Activated B cell treated with CpG ODN at 0.5 μM for 24 hours (primary cell): ENCODE measurements at regions of chr4 and their contacts with region 1.

Region 1: GRCh38 chr4:3047464-3048286 is 26.7 kb downstream of the HTT-AS start:
- DNase-seq: peak; percentile 75
- ATAC-seq: peak; percentile 92
- H3K4me3 Mint-ChIP-seq: peak overlapping the region; percentile 47
- H3K27ac Mint-ChIP-seq: peak overlapping the region; percentile 95
- H3K4me1 Mint-ChIP-seq: peaks cover 52% of the 10 kb centered on the region
- H3K27me3 Mint-ChIP-seq: no peaks in the 10 kb centered on the region
- CTCF ChIP-seq: no peak

Region 2: GRCh38 chr4:2689825-2690700 is 357.6 kb before region 1 on chr4:
- CTCF ChIA-PET with region 1: no interaction called
- POLR2A ChIA-PET with region 1: no interaction called
- intact Hi-C with region 1: no loop called
- DNase-seq: peak; percentile 78
- ATAC-seq: peak; percentile 85
- H3K4me3 Mint-ChIP-seq: peak overlapping the region; percentile 75
- H3K27ac Mint-ChIP-seq: peak overlapping the region; percentile 95
- H3K4me1 Mint-ChIP-seq: peaks cover 70% of the 10 kb centered on the region
- H3K27me3 Mint-ChIP-seq: no peaks in the 10 kb centered on the region
- CTCF ChIP-seq: no peak

Region 3: GRCh38 chr4:2771264-2771663 is 276.4 kb before region 1 on chr4:
- CTCF ChIA-PET with region 1: no interaction called
- POLR2A ChIA-PET with region 1: no interaction called
- intact Hi-C with region 1: no loop called
- DNase-seq: no peak
- ATAC-seq: no peak
- H3K4me3 Mint-ChIP-seq: no peak overlapping the region
- H3K27ac Mint-ChIP-seq: peak overlapping the region; percentile 33
- H3K4me1 Mint-ChIP-seq: peaks cover 13% of the 10 kb centered on the region
- H3K27me3 Mint-ChIP-seq: no peaks in the 10 kb centered on the region
- CTCF ChIP-seq: no peak

Region 4: DNA sequence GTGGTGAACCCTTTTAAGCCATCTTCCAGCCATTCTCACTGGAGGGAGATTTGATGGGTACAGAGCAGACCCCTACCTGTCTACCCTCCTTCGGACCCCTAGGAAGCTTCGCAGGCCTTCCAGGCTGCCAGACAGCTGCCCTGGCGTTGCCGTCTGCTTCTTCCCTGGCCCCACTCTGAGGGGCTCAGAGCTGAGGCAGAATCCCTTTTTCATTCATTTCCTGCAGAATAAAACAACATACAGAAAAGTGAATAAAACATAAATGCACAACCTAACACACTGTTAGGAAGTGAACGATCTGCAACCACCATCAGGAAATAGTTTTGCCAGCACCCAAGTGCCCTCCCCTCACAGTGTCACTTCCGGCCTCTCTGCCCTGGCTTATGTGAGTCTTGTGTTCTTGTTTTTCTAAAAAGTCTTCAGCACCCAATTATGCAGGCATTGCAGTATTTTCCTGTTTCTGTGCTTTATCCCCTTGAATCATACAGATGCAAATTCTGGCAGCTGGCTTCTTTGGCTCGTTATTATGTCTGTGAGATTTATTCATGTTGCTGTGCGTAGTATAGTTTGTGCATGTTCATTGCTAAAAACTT is 209.7 kb before region 1 on chr4:
- CTCF ChIA-PET with region 1: no interaction called
- POLR2A ChIA-PET with region 1: no interaction called
- intact Hi-C with region 1: loop called (anchors 5 kb)
- DNase-seq: peak; percentile 32
- ATAC-seq: peak; percentile 54
- H3K4me3 Mint-ChIP-seq: peak overlapping the region; percentile 74
- H3K27ac Mint-ChIP-seq: peak overlapping the region; percentile 81
- H3K4me1 Mint-ChIP-seq: peaks cover 74% of the 10 kb centered on the region
- H3K27me3 Mint-ChIP-seq: no peaks in the 10 kb centered on the region
- CTCF ChIP-seq: no peak

Region 5: GRCh38 chr4:3106339-3107186 is 58.9 kb after region 1 on chr4:
- CTCF ChIA-PET with region 1: interaction called, 28 read pairs
- POLR2A ChIA-PET with region 1: interaction called, 4 read pairs
- intact Hi-C with region 1: loop called (anchors 1 kb)
- DNase-seq: peak; percentile 81
- ATAC-seq: peak; percentile 100
- H3K4me3 Mint-ChIP-seq: no peak overlapping the region
- H3K27ac Mint-ChIP-seq: peak overlapping the region; percentile 73
- H3K4me1 Mint-ChIP-seq: peaks cover 9% of the 10 kb centered on the region
- H3K27me3 Mint-ChIP-seq: no peaks in the 10 kb centered on the region
- CTCF ChIP-seq: no peak

Region 6: DNA sequence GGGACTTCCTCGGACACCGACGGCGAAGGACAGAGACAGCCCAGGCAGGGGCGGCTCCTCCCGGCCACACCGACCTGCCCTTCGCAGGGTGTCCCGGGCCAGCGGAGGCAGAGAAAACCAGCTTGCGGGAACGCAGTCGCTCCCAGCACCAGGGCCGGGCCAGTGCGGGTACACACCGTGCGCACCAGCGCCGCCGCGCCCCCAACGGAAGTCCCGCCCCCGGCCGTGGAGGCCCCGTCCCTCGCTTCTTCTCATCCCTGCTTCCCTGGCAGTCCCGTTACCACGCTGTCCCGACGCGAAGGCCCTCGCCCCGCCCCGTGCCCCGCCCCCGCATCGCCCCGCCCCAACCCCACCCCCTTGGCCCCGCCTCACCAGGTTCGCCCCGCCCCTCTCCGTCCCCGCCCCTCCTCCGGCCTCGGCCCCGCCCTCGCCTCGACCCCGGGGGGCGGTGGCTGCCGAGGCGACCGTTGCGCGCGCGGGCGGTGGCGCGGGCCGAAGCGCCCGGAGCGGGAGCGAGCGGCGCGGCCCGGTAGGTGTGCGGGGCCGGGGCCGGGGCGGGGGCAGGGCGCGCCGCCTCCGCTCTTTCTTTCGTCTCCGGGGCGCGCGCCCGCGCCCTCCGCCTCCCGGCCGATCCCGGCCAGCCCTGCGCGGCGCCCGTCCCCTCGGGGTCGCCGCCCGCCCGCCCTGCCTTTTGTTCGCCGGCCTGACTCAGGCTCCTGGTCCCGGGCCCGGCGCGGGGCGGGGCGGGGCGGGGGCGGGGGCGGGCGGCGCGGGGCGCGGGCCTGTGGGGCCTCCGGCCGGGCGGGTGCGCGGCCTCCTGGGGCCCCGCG is 245.1 kb after region 1 on chr4 and contains the start of gene RGS12:
- CTCF ChIA-PET with region 1: no interaction called
- POLR2A ChIA-PET with region 1: no interaction called
- intact Hi-C with region 1: loop called (anchors 10 kb)
- DNase-seq: peak; percentile 81
- ATAC-seq: peak; percentile 83
- H3K4me3 Mint-ChIP-seq: peak within 1 kb of the TSS; percentile 86
- H3K27ac Mint-ChIP-seq: peak within 1 kb of the TSS; percentile 51
- H3K4me1 Mint-ChIP-seq: peaks cover 14% of the 10 kb centered on the region
- H3K27me3 Mint-ChIP-seq: peaks cover 15% of the 10 kb centered on the region
- CTCF ChIP-seq: no peak
- total RNA-seq, gene RGS12: 8.5 and 10.6 TPM in 2 replicates

Region 7: GRCh38 chr4:3480528-3481112 is 432.9 kb after region 1 on chr4:
- CTCF ChIA-PET with region 1: no interaction called
- POLR2A ChIA-PET with region 1: no interaction called
- intact Hi-C with region 1: loop called (anchors 10 kb)
- DNase-seq: peak; percentile 81
- ATAC-seq: peak; percentile 47
- H3K4me3 Mint-ChIP-seq: no peak overlapping the region
- H3K27ac Mint-ChIP-seq: no peak overlapping the region
- H3K4me1 Mint-ChIP-seq: peaks cover 39% of the 10 kb centered on the region
- H3K27me3 Mint-ChIP-seq: peaks cover 2% of the 10 kb centered on the region
- CTCF ChIP-seq: peak; percentile 80